Activated B cell treated with CpG ODN at 0.5 μM for 24 hours (primary cell): ENCODE measurements at regions of chr7 and their contacts with region 1.

Region 1: GRCh38 chr7:8143151-8143874 is 118.7 kb downstream of the ICA1 start:
- DNase-seq: no peak
- ATAC-seq: no peak
- H3K4me3 Mint-ChIP-seq: no peak overlapping the region
- H3K27ac Mint-ChIP-seq: no peak overlapping the region
- H3K4me1 Mint-ChIP-seq: peaks cover 6% of the 10 kb centered on the region
- H3K27me3 Mint-ChIP-seq: no peaks in the 10 kb centered on the region
- CTCF ChIP-seq: no peak

Region 2: GRCh38 chr7:8154272-8154671 is 11.0 kb after region 1 on chr7:
- CTCF ChIA-PET with region 1: no interaction called
- POLR2A ChIA-PET with region 1: no interaction called
- intact Hi-C with region 1: loop called (anchors 1 kb)
- DNase-seq: no peak
- ATAC-seq: no peak
- H3K4me3 Mint-ChIP-seq: no peak overlapping the region
- H3K27ac Mint-ChIP-seq: no peak overlapping the region
- H3K4me1 Mint-ChIP-seq: peaks cover 19% of the 10 kb centered on the region
- H3K27me3 Mint-ChIP-seq: no peaks in the 10 kb centered on the region
- CTCF ChIP-seq: no peak